ENCODE measurements at regions of chr17 and their contacts with region 1.

Region 1: DNA sequence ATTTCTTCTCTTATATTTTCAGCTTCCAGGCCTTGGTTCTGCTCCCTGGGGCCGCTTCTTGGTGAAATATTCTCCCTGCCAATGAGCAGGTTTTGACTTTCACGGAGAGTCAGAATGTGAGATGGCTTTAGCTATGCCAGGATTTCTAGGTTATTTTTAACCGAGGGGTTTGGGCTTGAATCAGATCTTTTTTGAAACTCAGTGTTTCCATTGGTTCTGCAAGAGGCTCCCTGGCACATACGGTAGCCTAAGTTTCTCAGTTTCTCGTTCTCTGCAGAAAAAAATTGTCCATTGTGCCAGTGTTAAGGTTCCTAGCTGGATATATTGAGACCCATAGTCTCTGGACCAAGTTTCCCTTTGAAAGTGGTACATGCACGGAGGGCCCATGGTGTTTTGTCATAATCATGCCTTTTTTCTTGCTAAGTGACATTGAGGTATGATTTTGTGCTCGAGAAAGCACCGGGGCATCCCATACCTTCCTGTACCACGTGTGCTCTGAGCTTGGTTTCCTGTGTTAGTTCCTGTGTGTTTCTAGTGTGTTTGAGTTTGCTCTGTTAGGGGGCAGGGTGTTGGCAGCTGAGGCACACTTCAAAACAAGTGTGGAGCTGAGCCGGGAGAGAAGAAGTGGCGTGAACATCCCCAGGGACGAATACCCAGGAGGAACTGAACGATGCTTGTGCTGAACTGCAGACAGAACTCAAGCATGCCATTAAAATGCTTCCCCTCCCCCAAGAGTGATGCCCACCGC is 127.2 kb downstream of the HS3ST3B1 start:
- DNase-seq: peak; percentile 23 to 84 (median 53)
- ATAC-seq: peak; percentile 98 to 99 (median 98)
- H3K4me3 ChIP-seq: peak overlapping the region; percentile 48 to 68
- H3K4me3 Mint-ChIP-seq: peak overlapping the region; percentile 74 to 84 (median 77)
- H3K27ac ChIP-seq: peak overlapping the region; percentile 75
- H3K27ac Mint-ChIP-seq: peak overlapping the region; percentile 99 to 100
- H3K4me1 ChIP-seq: peaks cover 31 to 47% of the 10 kb centered on the region in 2 experiments
- H3K4me1 Mint-ChIP-seq: peaks cover 61 to 68% (median 63%) of the 10 kb centered on the region in 3 donors
- H3K27me3 ChIP-seq: no peaks in the 10 kb centered on the region
- H3K27me3 Mint-ChIP-seq: no peaks in the 10 kb centered on the region

Region 2: DNA sequence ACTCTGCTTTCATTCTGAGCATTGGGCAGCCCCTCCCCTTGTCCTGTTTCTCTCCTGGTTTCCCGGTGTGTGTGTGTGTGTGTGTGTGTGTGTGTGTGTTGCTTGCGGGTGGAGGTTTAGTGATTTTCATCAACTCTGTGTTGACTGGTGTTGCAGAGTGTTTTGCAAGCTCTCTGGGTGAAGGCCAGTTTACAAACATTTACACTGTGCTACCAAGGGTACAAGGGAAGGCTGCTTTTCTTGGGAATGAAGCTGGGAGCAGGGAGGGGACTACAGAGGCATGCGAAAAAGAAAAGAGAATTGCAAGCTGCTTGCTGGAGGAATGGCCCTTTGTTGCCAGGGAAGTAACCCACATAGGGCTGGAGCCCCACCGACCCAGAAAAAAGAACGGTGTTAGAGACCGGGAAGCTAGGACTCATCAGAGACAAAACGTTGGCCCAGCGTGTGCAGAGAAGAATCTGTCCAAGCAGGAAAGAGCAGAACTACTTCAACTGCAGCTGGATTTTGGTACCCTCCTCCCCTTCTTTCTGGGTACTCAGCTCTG is 97.5 kb before region 1 on chr17:
- CTCF ChIA-PET with region 1: no interaction called
- POLR2A ChIA-PET with region 1: no interaction called
- DNase-seq: no peak
- ATAC-seq: no peak
- H3K4me3 ChIP-seq: no peak overlapping the region
- H3K4me3 Mint-ChIP-seq: peak overlapping the region in 2 of 3 donors; percentile 1 to 49
- H3K27ac ChIP-seq: no peak overlapping the region
- H3K27ac Mint-ChIP-seq: peak overlapping the region; percentile 72 to 79
- H3K4me1 ChIP-seq: peaks cover 24 to 55% of the 10 kb centered on the region in 2 experiments
- H3K4me1 Mint-ChIP-seq: peaks cover 80 to 95% (median 94%) of the 10 kb centered on the region in 3 donors
- H3K27me3 ChIP-seq: no peaks in the 10 kb centered on the region
- H3K27me3 Mint-ChIP-seq: no peaks in the 10 kb centered on the region

Region 3: GRCh38 chr17:14405189-14405588 is 22.9 kb before region 1 on chr17:
- CTCF ChIA-PET with region 1: interaction called, 3 to 13 read pairs
- POLR2A ChIA-PET with region 1: interaction called in 1 of 2 experiments, 4 read pairs
- DNase-seq: no peak
- ATAC-seq: no peak
- H3K4me3 ChIP-seq: no peak overlapping the region
- H3K4me3 Mint-ChIP-seq: peak overlapping the region in 1 of 3 donors; percentile 43
- H3K27ac ChIP-seq: peak overlapping the region; percentile 24
- H3K27ac Mint-ChIP-seq: peak overlapping the region; percentile 8 to 44
- H3K4me1 ChIP-seq: peaks cover 16 to 17% of the 10 kb centered on the region in 2 experiments
- H3K4me1 Mint-ChIP-seq: peaks cover 21 to 28% (median 27%) of the 10 kb centered on the region in 3 donors
- H3K27me3 ChIP-seq: no peaks in the 10 kb centered on the region
- H3K27me3 Mint-ChIP-seq: no peaks in the 10 kb centered on the region

Region 4: GRCh38 chr17:14448818-14449217 is 20.7 kb after region 1 on chr17:
- CTCF ChIA-PET with region 1: no interaction called
- POLR2A ChIA-PET with region 1: no interaction called
- DNase-seq: no peak
- ATAC-seq: no peak
- H3K4me3 ChIP-seq: no peak overlapping the region
- H3K4me3 Mint-ChIP-seq: no peak overlapping the region
- H3K27ac ChIP-seq: no peak overlapping the region
- H3K27ac Mint-ChIP-seq: no peak overlapping the region
- H3K4me1 ChIP-seq: no peaks in the 10 kb centered on the region
- H3K4me1 Mint-ChIP-seq: peaks cover 0 to 3% (median 2%) of the 10 kb centered on the region in 3 donors
- H3K27me3 ChIP-seq: no peaks in the 10 kb centered on the region
- H3K27me3 Mint-ChIP-seq: no peaks in the 10 kb centered on the region

Measured in T-cell (primary cell).